WTC11 (cell line): ENCODE measurements at regions of chr1 and their contacts with region 1.

Region 1: DNA sequence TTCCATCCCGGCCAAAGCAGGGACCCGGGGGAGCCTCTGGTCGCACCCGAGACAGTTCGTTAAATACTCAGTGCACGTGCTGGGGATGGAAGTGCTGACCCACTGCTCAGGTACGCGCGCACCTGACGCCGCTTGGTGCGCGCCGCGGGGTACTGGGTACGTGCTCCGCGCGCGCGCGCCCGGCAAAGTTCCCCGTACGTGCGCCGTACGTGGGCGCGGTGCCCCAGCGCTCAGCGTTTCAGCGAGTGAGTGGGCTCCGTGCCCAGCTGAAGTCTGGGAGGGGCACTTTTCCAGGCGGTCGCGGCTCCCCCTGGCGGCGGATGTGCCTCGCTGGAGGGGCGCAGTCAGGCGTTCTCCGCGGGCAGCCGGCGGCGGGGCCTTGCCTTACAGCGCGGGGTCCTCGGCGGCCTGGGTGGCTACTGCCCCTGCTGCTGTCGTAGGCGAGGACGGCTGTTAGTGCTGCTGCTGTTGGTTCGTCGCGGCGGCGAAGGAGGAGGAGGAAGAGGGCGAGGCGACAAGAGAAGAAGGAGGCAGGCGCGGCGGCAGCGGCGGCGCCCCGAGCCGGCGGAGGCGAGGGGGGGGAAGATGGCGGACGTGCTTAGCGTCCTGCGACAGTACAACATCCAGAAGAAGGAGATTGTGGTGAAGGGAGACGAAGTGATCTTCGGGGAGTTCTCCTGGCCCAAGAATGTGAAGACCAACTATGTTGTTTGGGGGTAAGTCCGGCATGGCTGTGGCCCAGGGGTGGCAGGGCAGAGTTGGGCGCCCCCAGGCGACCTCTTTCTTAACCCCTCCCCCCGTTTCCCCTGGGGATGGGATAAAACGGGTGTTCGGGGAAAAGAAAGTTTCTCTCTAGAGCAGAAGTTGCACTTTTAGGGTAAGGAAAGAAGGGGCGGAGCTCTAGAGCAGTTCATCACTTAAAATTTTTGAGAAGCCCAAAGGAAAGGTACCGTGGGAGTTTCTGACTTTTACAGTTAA is at the start of gene CDC73:
- DNase-seq: peak; percentile 97
- ATAC-seq: peak; percentile 94
- H3K4me3 Mint-ChIP-seq: peak within 1 kb of the TSS; percentile 93
- H3K27ac Mint-ChIP-seq: peak within 1 kb of the TSS; percentile 97
- H3K4me1 Mint-ChIP-seq: peaks cover 16% of the 10 kb centered on the region
- H3K27me3 Mint-ChIP-seq: no peaks in the 10 kb centered on the region; the same call in none of the 2 replicates
- CTCF ChIP-seq: peak; percentile 89
- total RNA-seq, gene CDC73: 50.7 to 57.1 TPM (median 51.6 TPM) in 3 replicates

Region 2: DNA sequence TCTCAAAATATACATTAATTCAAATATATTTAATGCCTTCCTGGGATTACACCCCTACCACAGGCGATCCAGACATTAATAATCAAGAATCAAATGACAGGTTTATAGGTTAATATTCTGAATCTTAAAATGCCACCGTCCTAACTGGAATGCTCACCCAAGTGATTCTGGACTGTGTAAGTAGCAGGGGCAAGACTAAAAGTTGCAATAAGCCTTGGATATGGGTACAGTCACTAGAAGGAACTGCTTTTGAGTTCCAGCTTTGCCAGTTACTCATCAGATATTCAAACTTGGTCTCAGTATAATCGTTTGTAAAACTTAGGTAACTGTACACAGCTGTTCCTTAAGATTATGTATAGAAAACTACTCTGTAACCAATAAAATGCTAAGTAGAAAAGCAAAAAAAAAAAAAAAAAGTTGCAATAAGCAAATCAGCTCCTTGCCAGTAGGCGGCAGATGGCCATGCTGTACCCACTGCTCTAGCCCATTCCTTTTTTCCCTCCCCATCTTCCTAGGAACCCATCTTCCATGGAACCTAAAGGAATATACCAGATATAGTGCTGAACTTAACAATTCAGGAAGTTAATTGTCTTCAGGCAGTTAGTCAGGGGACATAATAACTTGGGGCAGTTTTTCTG is 52.0 kb before region 1 on chr1:
- CTCF ChIA-PET with region 1: interaction called, 15 read pairs
- POLR2A ChIA-PET with region 1: interaction called, 3 read pairs
- DNase-seq: peak; percentile 21
- ATAC-seq: peak; percentile 81
- H3K4me3 Mint-ChIP-seq: no peak overlapping the region
- H3K27ac Mint-ChIP-seq: no peak overlapping the region
- H3K4me1 Mint-ChIP-seq: peaks cover 11% of the 10 kb centered on the region
- H3K27me3 Mint-ChIP-seq: no peaks in the 10 kb centered on the region
- CTCF ChIP-seq: peak; percentile 17; the same call in 1 of the 2 replicates

Region 3: DNA sequence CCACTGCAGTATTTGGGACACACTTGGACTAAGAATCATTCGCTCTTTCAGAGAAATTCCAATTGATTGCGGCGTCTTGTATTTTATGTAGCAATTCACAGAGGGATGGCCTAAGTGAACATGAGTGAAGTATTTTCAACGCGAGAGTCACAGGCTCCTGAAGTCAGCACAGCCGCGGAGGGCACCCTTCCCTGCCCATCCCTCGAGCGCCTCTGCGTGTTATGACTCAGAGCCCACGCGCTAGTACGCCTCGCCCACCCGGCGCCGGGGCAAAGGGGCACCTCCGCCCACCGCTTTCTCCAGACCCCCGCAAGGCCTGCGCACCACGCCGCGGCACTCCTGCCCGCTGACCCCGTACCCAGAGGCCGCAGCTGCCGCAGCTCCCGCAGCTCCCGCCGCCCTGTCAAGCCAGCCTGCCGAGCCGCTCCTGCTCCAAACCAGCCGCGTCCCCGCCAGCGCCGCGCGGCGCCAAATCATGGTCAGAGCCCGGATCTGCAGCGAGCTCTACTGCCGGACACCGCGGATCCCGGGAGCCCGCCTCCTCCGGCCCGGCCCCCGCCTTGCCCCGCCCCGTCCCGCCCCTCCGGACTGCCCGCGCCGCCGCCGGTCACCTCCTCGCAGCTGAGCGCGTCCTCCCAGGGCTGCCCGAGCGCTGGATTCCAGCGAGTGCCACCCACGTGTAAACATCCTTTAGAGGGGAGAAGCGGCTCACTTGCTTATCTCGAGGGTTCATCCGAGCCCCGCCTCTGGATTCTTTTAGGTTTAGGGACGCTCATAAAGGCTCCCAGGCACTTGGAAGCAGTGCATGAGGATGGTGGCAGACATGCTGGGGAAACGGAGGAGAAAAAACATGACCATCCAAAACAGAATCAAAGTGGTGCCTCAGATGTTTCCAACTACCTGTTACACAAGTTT is 16.7 kb before region 1 on chr1 and contains the start of gene GLRX2:
- CTCF ChIA-PET with region 1: interaction called, 13 read pairs
- POLR2A ChIA-PET with region 1: interaction called, 13 read pairs
- DNase-seq: peak; percentile 86
- ATAC-seq: peak; percentile 93
- H3K4me3 Mint-ChIP-seq: peak within 1 kb of the TSS; percentile 82
- H3K27ac Mint-ChIP-seq: peak within 1 kb of the TSS; percentile 89
- H3K4me1 Mint-ChIP-seq: peaks cover 15% of the 10 kb centered on the region
- H3K27me3 Mint-ChIP-seq: peaks cover 17% of the 10 kb centered on the region
- CTCF ChIP-seq: no peak
- total RNA-seq, gene GLRX2: 8.4 to 9.9 TPM (median 8.6 TPM) in 3 replicates

Region 4: GRCh38 chr1:193111641-193112090 is 10.2 kb before region 1 on chr1:
- CTCF ChIA-PET with region 1: interaction called, 16 read pairs
- POLR2A ChIA-PET with region 1: interaction called, 4 read pairs
- DNase-seq: peak; percentile 38
- ATAC-seq: peak; percentile 27
- H3K4me3 Mint-ChIP-seq: no peak overlapping the region
- H3K27ac Mint-ChIP-seq: no peak overlapping the region; the same call in 1 of the 2 replicates
- H3K4me1 Mint-ChIP-seq: peaks cover 36% of the 10 kb centered on the region
- H3K27me3 Mint-ChIP-seq: no peaks in the 10 kb centered on the region
- CTCF ChIP-seq: no peak